CD4-positive, alpha-beta T cell (primary cell): ENCODE measurements at regions of chr5 and their contacts with region 1.

Region 1: DNA sequence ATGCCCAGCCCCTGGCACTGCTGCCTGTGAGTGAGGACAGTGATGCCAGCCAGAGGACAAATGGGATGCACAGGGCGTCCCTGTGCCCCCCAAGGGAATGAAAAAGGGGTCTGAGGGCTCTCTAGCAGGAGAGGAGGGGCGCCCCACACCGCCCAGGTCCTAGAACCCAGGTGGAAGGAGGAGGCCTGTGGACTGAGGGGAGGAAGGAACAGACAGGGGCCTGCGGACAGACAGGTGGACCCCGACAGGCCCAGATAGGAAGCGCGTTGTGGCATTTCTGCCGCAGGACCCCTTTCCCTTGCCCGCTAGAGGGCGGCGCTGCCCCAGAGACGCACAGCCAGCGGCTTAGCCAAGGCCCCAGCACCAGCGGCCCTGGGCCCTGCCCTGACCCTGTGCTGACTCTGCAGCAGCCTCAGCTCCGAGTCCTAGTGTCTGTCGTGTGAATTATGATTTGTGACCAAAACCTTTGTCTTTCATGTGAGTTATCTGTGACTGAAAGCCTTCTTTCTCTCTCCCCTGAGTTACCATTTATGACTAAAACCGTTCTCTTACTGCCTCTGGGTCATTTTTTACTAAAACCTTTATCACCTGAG is 30.7 kb downstream of the TRIP13 start:
- DNase-seq: peak; percentile 52 to 82 (median 63)
- ATAC-seq: peak; percentile 69
- H3K4me3 ChIP-seq: no peak overlapping the region
- H3K4me3 Mint-ChIP-seq: no peak overlapping the region
- H3K27ac ChIP-seq: no peak overlapping the region
- H3K27ac Mint-ChIP-seq: no peak overlapping the region
- H3K4me1 ChIP-seq: peaks cover 13% of the 10 kb centered on the region
- H3K4me1 Mint-ChIP-seq: peaks cover 5% of the 10 kb centered on the region
- H3K27me3 ChIP-seq: peaks cover 12 to 26% of the 10 kb centered on the region in 2 experiments
- H3K27me3 Mint-ChIP-seq: peaks cover 40% of the 10 kb centered on the region
- CTCF ChIP-seq: peak; percentile 88

Region 2: DNA sequence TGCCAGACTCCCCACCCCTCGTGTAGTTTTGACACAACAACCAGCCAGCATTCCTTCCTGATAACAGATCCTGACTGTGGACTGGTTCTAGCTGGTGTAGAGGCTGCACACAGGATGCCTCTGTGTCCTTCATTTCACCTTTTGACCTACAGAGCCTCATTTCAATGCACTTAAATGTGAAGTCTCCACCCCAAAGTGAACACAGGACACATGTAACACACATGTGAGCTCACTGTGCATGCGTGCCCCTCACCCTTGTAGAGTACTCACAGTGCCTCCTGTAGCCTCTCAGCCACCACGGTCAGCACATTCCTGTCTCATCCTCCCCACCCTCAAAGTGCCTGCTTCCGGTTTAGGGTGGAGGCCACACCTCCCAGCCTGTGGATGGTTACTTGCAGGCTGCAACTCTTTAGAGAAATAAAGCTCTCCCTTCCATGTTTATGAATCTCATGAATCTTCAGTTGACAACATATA is 73.7 kb after region 1 on chr5:
- CTCF ChIA-PET with region 1: no interaction called
- POLR2A ChIA-PET with region 1: no interaction called
- intact Hi-C with region 1: loop called in 1 of 2 experiments (anchors 5 kb)
- DNase-seq: peak in 2 of 14 experiments; percentile 16 to 28
- ATAC-seq: peak; percentile 44
- H3K4me3 ChIP-seq: no peak overlapping the region
- H3K4me3 Mint-ChIP-seq: peak overlapping the region; percentile 7
- H3K27ac ChIP-seq: no peak overlapping the region
- H3K27ac Mint-ChIP-seq: peak overlapping the region; percentile 15
- H3K4me1 ChIP-seq: peaks cover 6% of the 10 kb centered on the region
- H3K4me1 Mint-ChIP-seq: peaks cover 14% of the 10 kb centered on the region
- H3K27me3 ChIP-seq: peaks cover 0 to 6% of the 10 kb centered on the region in 2 experiments
- H3K27me3 Mint-ChIP-seq: peaks cover 5% of the 10 kb centered on the region
- CTCF ChIP-seq: no peak

Region 3: DNA sequence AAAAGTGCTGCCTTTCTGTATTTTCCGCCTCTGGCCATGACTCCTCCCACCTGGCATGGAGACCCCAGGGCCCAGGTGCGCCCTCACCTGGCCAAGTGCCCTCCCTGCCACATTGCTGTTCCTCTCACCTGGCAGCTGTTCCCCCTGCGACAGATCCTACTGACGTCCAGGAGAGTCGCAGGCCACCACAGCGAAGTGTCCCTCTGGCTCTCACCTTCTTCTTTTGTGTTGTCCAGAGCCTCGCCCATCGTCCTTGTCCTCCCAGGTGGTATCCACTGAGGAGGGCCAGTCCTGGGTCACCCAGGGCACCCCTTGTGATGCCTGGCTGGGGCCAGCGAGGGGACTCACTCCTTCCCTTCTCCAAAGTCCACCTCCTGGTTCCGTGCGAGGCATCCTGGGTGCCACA is 87.9 kb after region 1 on chr5:
- CTCF ChIA-PET with region 1: no interaction called
- POLR2A ChIA-PET with region 1: no interaction called
- intact Hi-C with region 1: loop called in 1 of 2 experiments (anchors 1 kb)
- DNase-seq: peak in 10 of 14 experiments; percentile 29 to 68 (median 42)
- ATAC-seq: peak; percentile 51
- H3K4me3 ChIP-seq: no peak overlapping the region
- H3K4me3 Mint-ChIP-seq: peak overlapping the region; percentile 73
- H3K27ac ChIP-seq: no peak overlapping the region
- H3K27ac Mint-ChIP-seq: no peak overlapping the region
- H3K4me1 ChIP-seq: peaks cover 14% of the 10 kb centered on the region
- H3K4me1 Mint-ChIP-seq: peaks cover 10% of the 10 kb centered on the region
- H3K27me3 ChIP-seq: peaks cover 36 to 55% of the 10 kb centered on the region in 2 experiments
- H3K27me3 Mint-ChIP-seq: peaks cover 44% of the 10 kb centered on the region
- CTCF ChIP-seq: peak; percentile 35

Region 4: GRCh38 chr5:1026700-1027621 is 103.6 kb after region 1 on chr5:
- CTCF ChIA-PET with region 1: no interaction called
- POLR2A ChIA-PET with region 1: no interaction called
- intact Hi-C with region 1: no loop called
- DNase-seq: peak in 1 of 14 experiments; percentile 4
- ATAC-seq: no peak
- H3K4me3 ChIP-seq: no peak overlapping the region
- H3K4me3 Mint-ChIP-seq: no peak overlapping the region
- H3K27ac ChIP-seq: no peak overlapping the region
- H3K27ac Mint-ChIP-seq: no peak overlapping the region
- H3K4me1 ChIP-seq: no peaks in the 10 kb centered on the region
- H3K4me1 Mint-ChIP-seq: no peaks in the 10 kb centered on the region
- H3K27me3 ChIP-seq: no peaks in the 10 kb centered on the region
- H3K27me3 Mint-ChIP-seq: no peaks in the 10 kb centered on the region
- CTCF ChIP-seq: no peak